Activated B cell treated with CpG ODN at 0.5 μM for 24 hours (primary cell): ENCODE measurements at regions of chr9 and their contacts with region 1.

Region 1: DNA sequence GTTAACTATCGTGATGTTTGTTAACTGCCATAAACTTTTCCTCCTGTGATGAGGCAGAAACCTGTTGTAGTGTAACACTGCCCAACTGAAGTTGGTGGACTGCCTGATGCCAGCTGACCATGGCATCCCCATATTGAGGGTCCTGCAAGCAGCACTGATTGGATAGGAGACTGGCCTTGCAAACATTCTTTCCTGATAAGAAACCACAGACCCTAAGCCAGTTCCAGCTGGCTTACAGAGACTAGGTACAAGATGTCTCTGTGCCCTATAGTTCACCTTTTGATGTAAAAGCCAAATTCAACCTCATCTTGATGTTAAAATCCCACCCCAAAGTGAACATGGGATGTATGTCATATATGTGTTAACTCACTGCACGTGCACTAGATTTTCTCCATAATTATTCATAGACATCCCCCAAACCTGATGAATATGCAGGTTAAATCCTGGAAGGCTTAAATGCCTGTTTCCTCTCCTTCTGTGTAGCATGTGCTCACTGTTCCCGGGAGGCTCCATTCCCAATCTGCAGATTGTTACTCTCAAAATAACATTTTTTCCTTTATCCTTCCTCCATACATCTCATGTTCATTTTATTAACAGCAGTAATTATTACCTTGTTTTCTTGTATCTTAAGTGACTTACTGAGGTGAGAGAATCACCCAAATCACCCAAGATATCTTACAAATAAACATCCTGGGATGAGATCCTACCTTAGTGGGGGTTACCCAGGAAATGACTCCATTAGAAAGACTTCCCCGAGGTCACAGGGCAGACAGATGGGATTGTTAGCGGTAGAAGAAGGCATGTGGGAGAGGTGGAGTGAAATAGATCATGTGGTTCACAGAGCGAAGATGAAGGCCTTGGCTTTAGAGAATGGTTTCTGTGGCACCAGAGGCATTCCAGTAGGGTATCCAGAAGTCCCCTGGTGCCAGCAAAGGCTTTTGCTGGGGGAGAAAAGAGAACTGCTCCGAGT is 566.7 kb downstream of the CCDC171 start:
- DNase-seq: no peak
- ATAC-seq: no peak
- H3K4me3 Mint-ChIP-seq: no peak overlapping the region
- H3K27ac Mint-ChIP-seq: no peak overlapping the region
- H3K4me1 Mint-ChIP-seq: no peaks in the 10 kb centered on the region
- H3K27me3 Mint-ChIP-seq: no peaks in the 10 kb centered on the region
- CTCF ChIP-seq: no peak

Region 2: DNA sequence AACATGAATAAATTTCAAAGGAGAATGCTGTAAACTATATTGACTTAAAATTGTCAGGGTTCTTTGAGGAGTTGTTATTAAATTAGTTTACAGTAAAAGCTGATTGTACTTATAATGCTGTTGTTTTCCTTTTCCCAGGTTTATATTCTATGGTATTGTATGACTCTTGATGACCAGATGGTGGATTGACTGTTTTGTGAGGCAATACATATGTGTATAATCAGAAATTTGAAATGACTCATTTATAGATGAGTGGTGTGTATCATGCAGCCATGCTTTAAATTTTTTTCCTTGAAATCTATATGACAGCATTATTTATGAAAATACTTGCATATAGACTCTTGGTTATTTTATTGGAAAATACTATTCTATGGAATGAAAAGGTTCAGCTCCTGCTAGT is 1210.6 kb after region 1 on chr9:
- CTCF ChIA-PET with region 1: no interaction called
- POLR2A ChIA-PET with region 1: interaction called, 12 read pairs
- intact Hi-C with region 1: no loop called
- DNase-seq: no peak
- ATAC-seq: no peak
- H3K4me3 Mint-ChIP-seq: no peak overlapping the region
- H3K27ac Mint-ChIP-seq: no peak overlapping the region
- H3K4me1 Mint-ChIP-seq: no peaks in the 10 kb centered on the region
- H3K27me3 Mint-ChIP-seq: no peaks in the 10 kb centered on the region
- CTCF ChIP-seq: no peak

Region 3: GRCh38 chr9:17757816-17758215 is 1638.3 kb after region 1 on chr9:
- CTCF ChIA-PET with region 1: no interaction called
- POLR2A ChIA-PET with region 1: no interaction called
- intact Hi-C with region 1: no loop called
- DNase-seq: no peak
- ATAC-seq: no peak
- H3K4me3 Mint-ChIP-seq: no peak overlapping the region
- H3K27ac Mint-ChIP-seq: no peak overlapping the region
- H3K4me1 Mint-ChIP-seq: no peaks in the 10 kb centered on the region
- H3K27me3 Mint-ChIP-seq: no peaks in the 10 kb centered on the region
- CTCF ChIP-seq: no peak